MCF 10A (cell line): ENCODE measurements at regions of chr9 and their contacts with region 1.

Region 1: GRCh38 chr9:135961277-135961705 is at the start of gene UBAC1:
- DNase-seq: peak; percentile 91
- H3K4me3 Mint-ChIP-seq: peak within 1 kb of the TSS; percentile 85
- H3K27ac Mint-ChIP-seq: peak within 1 kb of the TSS; percentile 80
- H3K4me1 Mint-ChIP-seq: peaks cover 23% of the 10 kb centered on the region
- H3K27me3 Mint-ChIP-seq: no peaks in the 10 kb centered on the region
- CTCF ChIP-seq: peak; percentile 14
- total RNA-seq, gene UBAC1: 32.5 and 34.7 TPM in 2 replicates

Region 2: DNA sequence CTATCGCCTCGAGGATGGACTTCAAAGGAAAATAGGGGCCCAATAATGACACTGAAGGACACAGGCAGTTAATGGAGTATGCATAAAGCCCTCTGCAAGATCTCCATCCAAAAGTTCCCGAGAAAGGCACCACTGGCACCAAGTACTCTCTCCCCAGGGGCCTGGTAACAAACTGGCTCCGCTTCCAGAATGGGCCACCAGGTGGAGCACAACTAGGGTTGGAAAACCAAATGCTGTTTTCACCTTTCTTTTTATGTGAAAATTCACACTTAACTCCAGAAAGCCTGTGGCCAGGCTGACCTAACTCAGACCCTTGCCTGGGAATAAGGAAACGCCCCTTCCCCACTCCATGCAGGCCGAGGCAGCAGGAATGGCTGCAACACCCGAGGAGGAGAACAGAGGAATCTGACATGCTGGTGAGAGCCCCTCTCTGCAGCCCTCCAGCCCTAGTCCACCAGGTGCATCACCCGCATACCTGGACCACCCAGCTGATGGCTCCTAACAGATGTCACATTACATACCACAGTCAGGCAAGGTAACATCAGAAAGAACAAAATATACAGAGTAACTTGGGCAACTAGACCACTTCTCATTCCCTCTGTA is 96.7 kb before region 1 on chr9:
- CTCF ChIA-PET with region 1: interaction called, 10 read pairs
- POLR2A ChIA-PET with region 1: interaction called, 6 read pairs
- intact Hi-C with region 1: loop called (anchors 2 kb)
- DNase-seq: peak; percentile 65
- H3K4me3 Mint-ChIP-seq: no peak overlapping the region
- H3K27ac Mint-ChIP-seq: no peak overlapping the region
- H3K4me1 Mint-ChIP-seq: no peaks in the 10 kb centered on the region
- H3K27me3 Mint-ChIP-seq: no peaks in the 10 kb centered on the region
- CTCF ChIP-seq: peak; percentile 66

Region 3: DNA sequence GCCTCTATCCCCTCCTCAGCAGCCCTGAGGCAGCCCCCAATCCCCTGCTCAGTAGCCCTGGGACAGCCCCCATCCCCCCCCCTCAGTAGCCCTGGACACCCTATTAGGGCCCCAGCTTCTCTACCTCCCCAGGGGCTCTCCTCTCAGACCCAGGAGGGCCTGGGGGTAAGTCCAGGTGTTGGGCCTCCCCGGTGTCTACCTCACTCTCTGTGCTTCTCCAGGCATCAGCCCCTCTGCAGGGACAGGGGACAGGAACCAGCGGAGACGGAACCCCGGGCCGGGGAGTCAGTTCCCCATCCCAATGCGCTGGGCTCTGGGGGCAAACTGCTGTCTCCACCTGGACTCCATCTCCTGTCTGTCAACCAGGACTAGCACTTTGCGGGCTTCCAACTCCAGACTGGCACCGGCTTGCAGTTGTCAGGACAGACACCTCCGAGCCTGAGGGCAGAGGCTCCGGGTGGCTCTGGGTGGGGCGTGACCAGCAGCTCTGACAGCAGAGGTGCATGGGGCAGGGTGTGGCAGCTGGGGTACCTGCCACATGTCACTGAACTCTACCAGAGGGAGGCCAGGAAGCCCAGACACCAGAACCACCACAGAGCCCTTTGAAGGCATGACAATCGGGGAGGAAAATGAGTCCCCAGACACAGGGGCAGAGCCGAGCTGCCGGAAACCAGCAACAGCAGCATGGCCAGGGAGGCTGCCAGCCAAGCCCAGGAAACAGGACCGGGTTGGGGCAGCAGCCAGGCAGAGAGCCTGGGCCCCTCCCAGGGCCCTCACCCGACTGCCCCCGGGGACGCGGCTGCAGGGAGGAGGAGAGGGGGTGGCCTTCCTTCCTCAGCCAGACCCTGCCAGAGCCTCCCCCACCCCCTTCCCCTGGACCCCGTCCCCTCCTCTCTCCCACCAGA is 17.6 kb after region 1 on chr9:
- CTCF ChIA-PET with region 1: no interaction called
- POLR2A ChIA-PET with region 1: no interaction called
- intact Hi-C with region 1: no loop called
- DNase-seq: no peak
- H3K4me3 Mint-ChIP-seq: no peak overlapping the region
- H3K27ac Mint-ChIP-seq: no peak overlapping the region
- H3K4me1 Mint-ChIP-seq: no peaks in the 10 kb centered on the region
- H3K27me3 Mint-ChIP-seq: peaks cover 26% of the 10 kb centered on the region
- CTCF ChIP-seq: no peak

Region 4: GRCh38 chr9:136051517-136052432 is 90.5 kb after region 1 on chr9:
- CTCF ChIA-PET with region 1: interaction called, 3 read pairs
- POLR2A ChIA-PET with region 1: interaction called, 10 read pairs
- intact Hi-C with region 1: no loop called
- DNase-seq: peak; percentile 97
- H3K4me3 Mint-ChIP-seq: peak overlapping the region; percentile 64
- H3K27ac Mint-ChIP-seq: peak overlapping the region; percentile 35
- H3K4me1 Mint-ChIP-seq: peaks cover 6% of the 10 kb centered on the region
- H3K27me3 Mint-ChIP-seq: no peaks in the 10 kb centered on the region
- CTCF ChIP-seq: no peak

Region 5: DNA sequence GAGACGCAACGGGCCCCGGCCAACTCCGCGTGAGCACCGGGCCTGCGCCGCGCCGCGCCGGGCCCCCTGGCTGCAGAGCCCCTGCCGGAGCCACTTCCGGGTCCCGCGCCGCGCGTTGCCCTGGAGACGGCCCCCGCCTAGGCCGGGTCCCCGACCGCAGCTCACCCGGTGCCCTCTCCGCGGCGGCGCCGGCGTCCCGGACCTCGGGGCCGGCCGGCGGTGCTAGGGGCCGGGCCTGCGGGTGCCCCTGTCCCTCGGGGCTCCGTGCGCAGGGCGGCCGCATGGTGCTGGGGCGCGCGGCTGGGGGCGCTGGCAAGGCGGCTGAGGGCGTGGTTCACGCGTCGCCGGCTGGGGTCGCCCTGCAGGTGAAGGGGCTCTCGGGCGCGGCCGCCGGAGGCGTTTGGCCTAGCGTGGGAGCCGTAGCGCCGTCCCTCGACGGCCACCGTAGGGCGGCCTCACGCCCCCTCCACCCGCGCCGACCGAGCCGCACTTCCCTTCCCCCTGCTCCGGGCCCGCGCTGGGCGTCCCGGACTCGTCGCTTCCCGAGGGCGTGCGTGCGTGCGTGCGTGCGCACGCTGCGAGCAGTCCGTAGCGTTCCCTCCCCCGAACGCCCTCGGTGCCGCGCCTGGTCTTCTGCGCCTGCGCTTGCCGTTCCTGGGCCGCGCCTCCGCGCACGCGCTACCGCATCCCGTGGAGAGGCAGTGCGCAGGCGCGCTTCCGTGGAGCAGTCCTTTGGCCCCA is 157.2 kb after region 1 on chr9 and contains the start of gene TMEM250:
- CTCF ChIA-PET with region 1: interaction called, 104 read pairs
- POLR2A ChIA-PET with region 1: interaction called, 12 read pairs
- intact Hi-C with region 1: no loop called
- DNase-seq: peak; percentile 96
- H3K4me3 Mint-ChIP-seq: peak within 1 kb of the TSS; percentile 73
- H3K27ac Mint-ChIP-seq: peak within 1 kb of the TSS; percentile 51
- H3K4me1 Mint-ChIP-seq: no peaks in the 10 kb centered on the region
- H3K27me3 Mint-ChIP-seq: peaks cover under 1% of the 10 kb centered on the region
- CTCF ChIP-seq: no peak
- total RNA-seq, gene TMEM250: 43.2 and 45.4 TPM in 2 replicates

Region 6: GRCh38 chr9:136141682-136142415 is 180.6 kb after region 1 on chr9:
- CTCF ChIA-PET with region 1: no interaction called
- POLR2A ChIA-PET with region 1: no interaction called
- intact Hi-C with region 1: no loop called
- DNase-seq: no peak
- H3K4me3 Mint-ChIP-seq: no peak overlapping the region
- H3K27ac Mint-ChIP-seq: no peak overlapping the region
- H3K4me1 Mint-ChIP-seq: no peaks in the 10 kb centered on the region
- H3K27me3 Mint-ChIP-seq: no peaks in the 10 kb centered on the region
- CTCF ChIP-seq: no peak